ENCODE measurements at regions of chr14 and their contacts with region 1.

Region 1: DNA sequence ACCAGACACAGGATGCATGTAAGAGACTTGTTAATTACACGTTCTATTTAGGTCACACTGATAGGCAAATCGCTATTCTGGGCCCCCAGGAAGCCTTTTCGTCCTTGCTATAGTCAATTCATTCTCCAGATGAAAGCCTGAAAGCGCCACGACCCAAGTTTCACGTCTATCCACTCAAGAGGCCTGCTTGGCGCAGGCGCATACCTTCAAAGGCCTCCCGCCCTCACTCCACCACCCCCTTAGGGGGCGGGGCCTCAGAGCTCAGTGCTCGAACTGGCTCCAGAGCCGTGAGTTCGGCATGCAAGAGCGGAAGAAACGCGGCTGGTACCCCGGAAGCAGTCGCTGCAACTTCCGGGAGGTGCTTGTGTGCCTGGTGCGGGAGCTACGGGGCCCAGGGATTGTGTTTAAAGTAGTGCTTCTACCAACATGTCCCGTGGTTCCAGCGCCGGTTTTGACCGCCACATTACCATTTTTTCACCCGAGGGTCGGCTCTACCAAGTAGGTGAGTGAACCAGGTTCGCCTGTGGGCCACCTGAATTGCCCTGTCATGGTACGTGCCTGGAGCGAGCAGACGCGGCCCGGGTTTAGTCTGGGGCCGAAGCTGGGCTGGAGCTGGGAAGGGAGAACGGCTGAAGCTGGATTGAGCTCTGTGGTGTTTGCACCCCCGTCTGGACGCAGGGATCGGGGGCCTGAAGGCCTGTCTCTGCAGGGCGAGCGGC is at the start of gene PSMA6:
- DNase-seq: peak; percentile 99 to 100 (median 100)

Region 2: DNA sequence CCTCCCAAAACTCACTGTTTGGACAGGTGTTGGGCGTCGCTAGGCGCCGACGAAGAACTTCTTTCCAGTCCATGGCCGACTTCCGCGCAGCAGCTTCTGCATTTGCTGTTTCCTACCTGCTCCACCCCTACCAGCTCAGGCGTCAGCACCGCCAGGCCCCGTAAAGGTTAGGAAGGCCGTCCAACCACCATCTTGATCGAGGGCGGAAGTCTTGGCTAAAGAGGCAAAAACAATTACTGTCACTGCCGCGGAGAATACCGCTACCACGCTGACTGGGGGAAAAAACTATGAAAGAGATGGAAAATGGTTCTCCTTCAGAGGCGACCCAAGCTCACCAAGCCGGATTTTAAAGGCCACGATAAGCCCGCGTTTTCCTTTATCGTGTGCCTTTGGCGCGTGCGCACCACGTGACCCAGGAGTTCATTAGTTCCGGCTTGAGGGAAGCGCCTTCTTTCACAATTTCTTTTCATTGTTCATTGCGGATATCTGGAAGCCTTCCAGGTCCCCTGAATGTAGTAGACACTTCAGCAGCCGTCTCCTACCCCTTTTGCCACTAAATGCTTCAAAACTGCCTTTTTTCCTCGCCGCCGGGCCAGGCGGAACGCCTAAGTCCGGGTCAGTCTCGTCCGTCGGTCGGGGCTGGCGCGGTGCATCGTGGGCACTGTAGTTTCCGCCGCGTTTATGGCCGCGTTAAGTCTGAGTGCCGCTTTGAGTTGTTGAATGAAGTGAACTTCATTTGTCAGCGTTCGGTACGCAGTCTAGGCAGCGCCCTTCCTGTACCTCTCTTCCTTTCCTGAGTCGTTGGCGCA is 170.1 kb before region 1 on chr14 and contains the starts of genes PPP2R3C and PRORP:
- intact Hi-C with region 1: loop called (anchors 5 kb)
- DNase-seq: peak; percentile 82 to 98 (median 89)

Region 3: GRCh38 chr14:35134328-35135123 is 157.7 kb before region 1 on chr14:
- intact Hi-C with region 1: no loop called
- DNase-seq: no peak

Region 4: GRCh38 chr14:35317820-35318219 is 25.6 kb after region 1 on chr14:
- intact Hi-C with region 1: no loop called
- DNase-seq: no peak

Region 5: GRCh38 chr14:35341446-35342159 is 49.4 kb after region 1 on chr14:
- intact Hi-C with region 1: loop called (anchors 10 kb)
- DNase-seq: peak; percentile 89 to 98 (median 94)